ENCODE measurements at regions of chr15 and their contacts with region 1.

Region 1: GRCh38 chr15:69058830-69059556 is 44.5 kb downstream of the NOX5 start:
- DNase-seq: peak; percentile 84 to 96 (median 92)
- ATAC-seq: peak; percentile 87
- H3K4me3 ChIP-seq: no peak overlapping the region
- H3K4me1 ChIP-seq: peaks cover 15% of the 10 kb centered on the region
- CTCF ChIP-seq: peak; percentile 58

Region 2: DNA sequence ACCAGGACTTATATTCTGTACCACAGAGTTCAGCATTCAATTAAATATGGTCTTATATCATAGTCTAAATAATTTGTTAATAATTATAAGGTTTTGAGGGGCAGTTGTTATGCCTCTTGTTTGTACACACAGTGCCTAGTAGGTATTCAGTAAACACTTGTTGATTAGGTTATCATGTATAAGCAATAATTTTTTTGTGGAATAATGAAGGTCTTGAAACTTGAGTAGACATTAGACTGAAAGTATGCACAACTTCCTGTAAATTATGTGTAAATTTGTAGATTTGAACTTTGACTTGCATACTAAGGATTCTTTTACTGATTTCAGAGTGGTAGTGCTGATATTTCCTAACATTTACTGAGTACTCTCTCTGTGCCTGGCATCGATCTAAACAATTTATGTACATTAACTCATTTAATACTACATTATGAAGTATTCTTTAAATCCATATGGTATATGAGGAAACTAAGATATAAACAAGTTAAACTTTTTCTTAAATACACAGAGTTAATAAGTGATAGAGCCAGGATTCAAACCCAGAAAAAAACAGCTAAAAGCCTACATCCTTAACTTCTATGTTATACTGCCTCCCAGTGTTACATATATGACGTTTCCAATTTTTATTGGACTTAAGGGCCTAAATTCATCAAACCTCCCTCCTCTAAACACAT is 166.5 kb after region 1 on chr15:
- intact Hi-C with region 1: loop called in 1 of 2 experiments (anchors 10 kb)
- DNase-seq: no peak
- ATAC-seq: peak; percentile 56
- H3K4me3 ChIP-seq: no peak overlapping the region
- H3K4me1 ChIP-seq: peaks cover 25% of the 10 kb centered on the region
- CTCF ChIP-seq: no peak

Region 3: GRCh38 chr15:69265347-69265955 is 206.5 kb after region 1 on chr15:
- intact Hi-C with region 1: loop called in 1 of 2 experiments (anchors 10 kb)
- DNase-seq: peak in 1 of 3 donors; percentile 39
- ATAC-seq: no peak
- H3K4me3 ChIP-seq: no peak overlapping the region
- H3K4me1 ChIP-seq: no peaks in the 10 kb centered on the region
- CTCF ChIP-seq: no peak

Region 4: DNA sequence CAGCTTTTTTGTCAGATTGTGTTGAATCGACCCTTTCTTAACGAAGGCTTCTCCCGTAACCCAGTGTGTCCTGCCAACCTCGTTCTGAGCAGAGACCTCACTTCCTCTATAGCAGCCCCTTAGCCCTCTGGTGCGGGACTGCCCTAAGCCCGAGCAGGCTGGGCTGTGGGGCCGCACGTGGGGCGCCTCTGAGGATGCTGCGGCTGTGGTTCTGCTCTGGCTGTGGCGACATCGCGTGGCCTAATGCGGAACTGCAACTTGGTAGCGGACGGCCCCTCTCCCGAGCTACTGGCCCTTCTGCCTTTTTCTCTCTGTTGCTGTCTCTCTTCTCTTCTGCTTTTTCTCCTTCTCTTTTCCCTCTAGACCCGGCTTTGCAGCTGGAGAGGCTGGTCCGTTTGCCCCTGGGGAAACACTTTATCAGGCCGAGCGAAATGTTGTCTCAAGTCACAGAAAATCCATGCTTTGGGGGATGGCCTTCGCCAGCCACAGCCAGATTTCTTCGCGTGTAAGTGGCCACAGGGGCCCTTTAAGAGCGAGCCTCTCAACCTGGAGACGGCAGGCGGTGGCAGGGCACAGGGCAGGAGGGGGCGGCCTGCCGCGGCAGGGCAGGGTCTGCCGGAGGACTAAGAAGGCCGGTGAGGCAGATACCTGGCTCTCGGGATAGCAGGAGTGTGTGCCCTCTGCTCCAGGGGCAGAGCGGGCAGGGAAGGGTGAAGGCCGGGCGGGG is 335.7 kb after region 1 on chr15:
- intact Hi-C with region 1: loop called (anchors 5 kb)
- DNase-seq: peak; percentile 79 to 88 (median 87)
- ATAC-seq: peak; percentile 92
- H3K4me3 ChIP-seq: no peak overlapping the region
- H3K4me1 ChIP-seq: no peaks in the 10 kb centered on the region
- CTCF ChIP-seq: peak; percentile 94

Measured in mucosa of descending colon (tissue), 3 donors.